MCF 10A (cell line): ENCODE measurements at regions of chr14 and their contacts with region 1.

Region 1: DNA sequence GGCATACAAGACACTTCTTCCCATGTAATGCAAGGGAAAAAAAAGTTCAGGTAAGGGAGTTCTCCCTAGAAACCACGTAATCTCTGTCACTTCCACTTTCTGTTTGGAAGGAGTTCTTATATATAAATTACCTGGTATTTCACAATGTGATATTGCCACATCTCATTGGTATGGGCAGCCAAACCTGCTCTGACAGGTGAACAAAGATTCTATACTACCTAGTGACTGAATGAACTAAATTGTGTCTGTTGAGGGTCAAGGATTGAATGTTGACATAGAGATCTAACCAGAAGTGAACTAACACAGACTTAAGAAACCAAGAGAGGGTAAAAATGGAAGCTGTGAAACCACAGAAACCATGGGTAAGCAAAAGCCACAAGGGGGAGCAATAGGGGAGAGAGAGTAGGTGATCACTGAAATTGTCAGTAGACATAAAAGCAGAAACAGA is 161.3 kb downstream of the RPL10L start:
- DNase-seq: peak; percentile 44
- H3K4me3 Mint-ChIP-seq: no peak overlapping the region
- H3K27ac Mint-ChIP-seq: no peak overlapping the region
- H3K4me1 Mint-ChIP-seq: no peaks in the 10 kb centered on the region
- H3K27me3 Mint-ChIP-seq: peaks cover 63% of the 10 kb centered on the region
- CTCF ChIP-seq: peak; percentile 19

Region 2: GRCh38 chr14:47040550-47040949 is 550.3 kb after region 1 on chr14:
- CTCF ChIA-PET with region 1: no interaction called
- POLR2A ChIA-PET with region 1: no interaction called
- intact Hi-C with region 1: loop called (anchors 5 kb)
- DNase-seq: peak; percentile 14
- H3K4me3 Mint-ChIP-seq: no peak overlapping the region
- H3K27ac Mint-ChIP-seq: no peak overlapping the region
- H3K4me1 Mint-ChIP-seq: no peaks in the 10 kb centered on the region
- H3K27me3 Mint-ChIP-seq: peaks cover 42% of the 10 kb centered on the region
- CTCF ChIP-seq: no peak